ENCODE measurements at regions of chr15 and their contacts with region 1.

Region 1: GRCh38 chr15:90221246-90221900 is 12.4 kb downstream of the CIB1 start:
- DNase-seq: peak; percentile 56
- H3K4me3 ChIP-seq: no peak overlapping the region
- CTCF ChIP-seq: peak; percentile 92

Region 2: DNA sequence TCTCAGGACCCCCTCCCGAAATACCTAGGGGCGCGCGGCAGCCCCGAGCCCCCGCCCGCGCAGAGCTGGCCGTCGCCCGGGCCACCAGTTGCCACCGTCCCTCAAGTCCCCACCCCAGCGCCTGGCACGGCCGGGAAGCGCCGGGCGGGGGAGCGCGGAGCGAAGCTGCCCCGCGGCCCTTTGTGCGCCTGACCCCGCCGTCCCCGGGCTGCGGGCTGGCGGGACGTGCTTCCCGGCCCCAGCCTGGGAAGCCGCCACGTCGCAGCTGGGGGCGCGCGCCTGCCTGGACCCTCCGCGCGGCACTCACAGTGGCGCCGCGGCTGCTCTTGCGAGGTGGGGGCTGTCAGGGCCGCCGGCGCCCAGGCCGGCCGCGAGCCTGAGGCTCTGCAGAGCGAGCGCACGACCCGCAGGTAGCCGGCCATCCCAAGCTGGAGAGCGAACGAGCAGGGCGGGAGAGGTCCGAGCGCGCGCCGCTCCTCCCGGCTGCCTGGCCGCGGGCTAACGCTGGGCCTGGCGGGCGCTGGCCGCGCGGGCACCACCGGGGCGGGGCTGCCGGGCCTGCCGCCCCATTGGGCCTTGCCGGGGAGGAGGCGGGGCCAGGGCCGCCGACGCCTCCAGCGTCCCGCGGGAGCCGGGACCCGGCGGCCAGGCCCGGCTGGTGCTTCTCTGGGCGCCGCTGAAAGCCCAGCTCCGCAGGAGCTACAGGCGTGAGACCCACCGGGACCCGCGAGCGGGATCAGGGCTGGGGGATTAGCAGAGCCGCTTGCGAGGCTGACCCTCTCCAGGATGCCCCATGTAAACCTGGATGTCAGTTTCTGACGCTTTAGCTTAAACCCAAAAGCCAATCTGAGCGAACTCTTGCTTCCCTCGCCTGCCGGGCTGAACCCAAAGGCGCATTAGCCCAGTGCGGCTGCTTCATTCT is 119.1 kb before region 1 on chr15 and contains the start of gene IDH2:
- CTCF ChIA-PET with region 1: interaction called, 10 read pairs
- POLR2A ChIA-PET with region 1: interaction called, 3 read pairs
- DNase-seq: no peak
- H3K4me3 ChIP-seq: peak within 1 kb of the TSS; percentile 75
- CTCF ChIP-seq: no peak

Region 3: GRCh38 chr15:90154861-90155626 is 66.3 kb before region 1 on chr15:
- CTCF ChIA-PET with region 1: interaction called, 36 read pairs
- POLR2A ChIA-PET with region 1: no interaction called
- DNase-seq: no peak
- H3K4me3 ChIP-seq: no peak overlapping the region
- CTCF ChIP-seq: no peak

Region 4: DNA sequence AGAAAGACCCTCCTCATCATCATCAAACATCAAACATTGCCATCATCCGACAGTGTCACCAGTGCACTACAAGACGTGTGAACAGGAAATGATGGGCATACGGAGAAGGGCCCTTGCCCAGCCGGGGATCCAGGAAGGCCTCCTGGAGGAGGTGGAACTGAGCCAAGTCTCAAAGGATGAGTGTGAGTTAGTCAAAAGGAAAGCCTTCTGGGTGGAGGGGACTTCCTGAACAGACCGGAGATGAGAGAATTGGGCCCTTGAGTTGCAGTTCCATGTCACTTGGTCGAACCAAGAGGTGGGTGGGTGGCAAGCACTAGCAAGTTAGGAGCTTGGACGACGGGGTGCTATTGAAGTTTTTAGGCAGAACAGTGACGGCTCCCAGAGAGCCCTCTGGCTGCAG is 11.8 kb before region 1 on chr15:
- CTCF ChIA-PET with region 1: interaction called, 18 read pairs
- POLR2A ChIA-PET with region 1: no interaction called
- DNase-seq: no peak
- H3K4me3 ChIP-seq: no peak overlapping the region
- CTCF ChIP-seq: no peak

Region 5: GRCh38 chr15:90419738-90420406 is 198.5 kb after region 1 on chr15:
- CTCF ChIA-PET with region 1: no interaction called
- POLR2A ChIA-PET with region 1: no interaction called
- DNase-seq: peak; percentile 77
- H3K4me3 ChIP-seq: peak overlapping the region; percentile 36
- CTCF ChIP-seq: no peak

Region 6: GRCh38 chr15:90701880-90702630 is 480.7 kb after region 1 on chr15:
- CTCF ChIA-PET with region 1: no interaction called
- POLR2A ChIA-PET with region 1: no interaction called
- DNase-seq: no peak
- H3K4me3 ChIP-seq: no peak overlapping the region
- CTCF ChIP-seq: no peak